ENCODE measurements at regions of chr17 and their contacts with region 1.

Region 1: GRCh38 chr17:16285957-16286640 is 67.2 kb downstream of the CENPV start:
- H3K4me3 Mint-ChIP-seq: peak overlapping the region; percentile 53
- H3K27ac Mint-ChIP-seq: peak overlapping the region; percentile 90
- H3K4me1 Mint-ChIP-seq: peaks cover 53% of the 10 kb centered on the region
- H3K27me3 Mint-ChIP-seq: no peaks in the 10 kb centered on the region

Region 2: GRCh38 chr17:15883617-15884111 is 402.4 kb before region 1 on chr17:
- intact Hi-C with region 1: no loop called
- H3K4me3 Mint-ChIP-seq: no peak overlapping the region
- H3K27ac Mint-ChIP-seq: no peak overlapping the region
- H3K4me1 Mint-ChIP-seq: peaks cover 34% of the 10 kb centered on the region
- H3K27me3 Mint-ChIP-seq: peaks cover 3% of the 10 kb centered on the region

Region 3: DNA sequence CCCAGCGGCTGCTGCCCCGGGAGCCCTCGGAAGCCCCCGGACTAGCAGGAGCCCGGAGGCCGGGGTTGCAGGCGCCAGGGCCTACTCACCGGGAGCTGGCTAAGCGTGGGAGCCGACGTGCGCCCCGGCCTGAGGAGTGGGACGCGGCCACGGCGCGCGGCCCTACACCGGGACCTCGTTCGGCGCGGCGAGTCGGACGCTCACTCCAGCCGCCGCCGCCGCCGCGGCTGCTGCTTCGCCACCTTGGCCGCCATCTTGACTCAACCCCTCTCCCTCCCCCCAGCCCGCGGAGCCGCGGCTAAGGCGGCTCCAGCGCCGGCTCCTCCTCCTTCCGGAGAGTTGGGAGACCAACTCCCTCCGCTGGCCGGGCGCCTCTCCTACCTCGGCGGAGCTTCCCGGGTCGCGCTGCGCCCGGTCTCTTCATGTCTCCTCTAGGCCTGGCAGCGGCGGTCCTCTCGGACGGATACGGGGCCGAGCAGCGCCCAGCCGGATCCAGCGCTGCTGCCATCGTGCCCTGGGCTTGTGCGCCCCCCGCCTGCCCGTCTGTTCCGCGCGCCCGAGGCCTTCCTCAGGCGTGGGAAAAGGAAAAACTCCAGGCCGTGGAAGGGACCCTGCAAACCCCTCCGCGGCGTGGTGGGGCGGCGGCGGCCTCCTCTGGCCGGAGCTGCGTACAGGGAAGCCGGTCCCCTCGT is 70.7 kb before region 1 on chr17 and contains the start of gene NCOR1:
- intact Hi-C with region 1: loop called (anchors 5 kb)
- H3K4me3 Mint-ChIP-seq: peak within 1 kb of the TSS; percentile 98
- H3K27ac Mint-ChIP-seq: peak within 1 kb of the TSS; percentile 90
- H3K4me1 Mint-ChIP-seq: peaks cover 36% of the 10 kb centered on the region
- H3K27me3 Mint-ChIP-seq: no peaks in the 10 kb centered on the region

Region 4: GRCh38 chr17:16269658-16270057 is 16.4 kb before region 1 on chr17:
- intact Hi-C with region 1: no loop called
- H3K4me3 Mint-ChIP-seq: no peak overlapping the region
- H3K27ac Mint-ChIP-seq: no peak overlapping the region
- H3K4me1 Mint-ChIP-seq: peaks cover 55% of the 10 kb centered on the region
- H3K27me3 Mint-ChIP-seq: no peaks in the 10 kb centered on the region

Region 5: GRCh38 chr17:16380640-16381495 is 94.8 kb after region 1 on chr17 and contains the start of gene UBB:
- intact Hi-C with region 1: no loop called
- H3K4me3 Mint-ChIP-seq: peak within 1 kb of the TSS; percentile 89
- H3K27ac Mint-ChIP-seq: peak within 1 kb of the TSS; percentile 100
- H3K4me1 Mint-ChIP-seq: peaks cover 24% of the 10 kb centered on the region
- H3K27me3 Mint-ChIP-seq: no peaks in the 10 kb centered on the region

Measured in dendritic cell treated with granulocyte-macrophage colony-stimulating factor and Interleukin-4, amounts not matched to agents 40 ng/mL and 50 ng/mL, for 4 days (primary cell).